ENCODE measurements at regions of chr14 and their contacts with region 1.

Region 1: DNA sequence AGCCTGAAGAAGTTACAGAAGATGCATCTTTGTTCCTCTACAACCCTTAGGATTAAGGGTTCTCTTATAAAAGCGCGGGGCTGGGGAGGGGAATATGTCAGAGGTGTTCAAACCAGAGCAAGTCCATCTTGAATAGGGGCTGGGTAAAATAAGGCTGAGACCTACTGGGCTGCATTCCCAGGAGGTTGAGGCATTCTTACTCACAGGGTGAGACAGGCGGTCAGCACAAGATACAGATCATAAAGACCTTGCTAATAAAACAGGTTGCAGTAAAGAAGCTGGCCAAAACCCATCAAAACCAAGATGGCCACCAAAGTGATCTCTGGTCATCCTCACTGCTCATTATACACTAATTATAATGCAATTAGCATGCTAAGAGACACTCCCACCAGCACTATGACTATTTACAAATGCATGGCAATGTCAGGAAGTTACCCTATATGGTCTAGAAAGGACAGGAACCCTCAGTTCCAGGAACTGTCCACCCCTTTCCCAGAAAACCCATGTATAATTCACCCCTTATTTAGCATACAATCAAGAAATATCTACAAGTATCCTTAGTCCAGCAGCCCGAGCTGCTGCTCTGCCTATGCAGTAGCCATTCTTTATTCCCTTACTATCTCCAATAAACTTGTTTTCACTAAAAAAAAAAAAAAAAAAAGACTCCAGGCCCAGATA is 108.1 kb upstream of the FOXN3 start:
- DNase-seq: no peak
- ATAC-seq: no peak
- H3K4me3 ChIP-seq: no peak overlapping the region
- H3K4me3 Mint-ChIP-seq: no peak overlapping the region
- H3K27ac ChIP-seq: no peak overlapping the region
- H3K27ac Mint-ChIP-seq: peak overlapping the region; percentile 56
- H3K4me1 ChIP-seq: no peaks in the 10 kb centered on the region
- H3K4me1 Mint-ChIP-seq: peaks cover 39 to 63% of the 10 kb centered on the region in 2 donors
- H3K27me3 ChIP-seq: no peaks in the 10 kb centered on the region
- H3K27me3 Mint-ChIP-seq: no peaks in the 10 kb centered on the region
- CTCF ChIP-seq: no peak

Region 2: DNA sequence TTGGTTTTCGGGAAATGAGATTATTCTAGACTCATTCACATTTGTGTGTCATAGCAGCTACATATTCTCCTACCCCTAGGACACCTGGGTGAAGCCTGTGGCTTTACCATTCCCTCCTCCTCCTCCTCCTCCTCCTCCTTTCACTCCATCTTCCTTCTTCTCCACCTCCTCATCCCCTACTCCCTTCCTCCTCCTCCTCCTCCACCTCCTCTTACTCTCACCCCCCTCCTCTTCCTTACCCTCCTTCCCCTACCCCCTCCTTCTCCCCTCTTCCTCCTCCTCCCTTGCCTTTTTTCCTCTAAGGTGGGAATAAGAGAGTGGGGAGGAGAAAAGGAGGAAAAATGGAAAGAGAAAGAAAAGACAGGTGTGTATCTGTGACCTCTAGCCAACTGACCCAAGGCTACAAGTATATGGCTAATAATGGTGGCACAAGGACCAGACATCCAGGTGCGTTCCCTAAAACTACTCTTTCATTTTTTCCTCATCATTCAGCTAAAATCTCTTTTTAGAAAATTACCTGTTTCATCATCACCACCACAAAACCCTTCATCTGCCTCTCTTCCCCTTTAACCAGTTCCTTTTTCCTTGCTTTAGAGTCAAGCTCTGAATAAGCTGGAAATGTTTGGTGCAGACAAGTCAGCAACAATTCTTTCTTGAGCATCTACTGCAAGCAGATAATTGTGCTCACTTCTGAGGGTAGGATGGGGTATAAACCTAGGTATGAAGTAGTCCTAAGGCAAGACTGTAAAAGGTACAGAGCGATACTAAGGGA is 41.7 kb after region 1 on chr14:
- intact Hi-C with region 1: loop called (anchors 5 kb)
- DNase-seq: no peak
- ATAC-seq: no peak
- H3K4me3 ChIP-seq: no peak overlapping the region
- H3K4me3 Mint-ChIP-seq: no peak overlapping the region
- H3K27ac ChIP-seq: no peak overlapping the region
- H3K27ac Mint-ChIP-seq: peak overlapping the region; percentile 56 to 68
- H3K4me1 ChIP-seq: peaks cover 20% of the 10 kb centered on the region
- H3K4me1 Mint-ChIP-seq: peaks cover 77 to 81% of the 10 kb centered on the region in 2 donors
- H3K27me3 ChIP-seq: no peaks in the 10 kb centered on the region
- H3K27me3 Mint-ChIP-seq: no peaks in the 10 kb centered on the region
- CTCF ChIP-seq: no peak

Measured in natural killer cell (primary cell).